ENCODE measurements at regions of chr12 and their contacts with region 1.

Region 1: GRCh38 chr12:126212824-126213223 is 1147.6 kb downstream of the AACS start:
- DNase-seq: no peak

Region 2: DNA sequence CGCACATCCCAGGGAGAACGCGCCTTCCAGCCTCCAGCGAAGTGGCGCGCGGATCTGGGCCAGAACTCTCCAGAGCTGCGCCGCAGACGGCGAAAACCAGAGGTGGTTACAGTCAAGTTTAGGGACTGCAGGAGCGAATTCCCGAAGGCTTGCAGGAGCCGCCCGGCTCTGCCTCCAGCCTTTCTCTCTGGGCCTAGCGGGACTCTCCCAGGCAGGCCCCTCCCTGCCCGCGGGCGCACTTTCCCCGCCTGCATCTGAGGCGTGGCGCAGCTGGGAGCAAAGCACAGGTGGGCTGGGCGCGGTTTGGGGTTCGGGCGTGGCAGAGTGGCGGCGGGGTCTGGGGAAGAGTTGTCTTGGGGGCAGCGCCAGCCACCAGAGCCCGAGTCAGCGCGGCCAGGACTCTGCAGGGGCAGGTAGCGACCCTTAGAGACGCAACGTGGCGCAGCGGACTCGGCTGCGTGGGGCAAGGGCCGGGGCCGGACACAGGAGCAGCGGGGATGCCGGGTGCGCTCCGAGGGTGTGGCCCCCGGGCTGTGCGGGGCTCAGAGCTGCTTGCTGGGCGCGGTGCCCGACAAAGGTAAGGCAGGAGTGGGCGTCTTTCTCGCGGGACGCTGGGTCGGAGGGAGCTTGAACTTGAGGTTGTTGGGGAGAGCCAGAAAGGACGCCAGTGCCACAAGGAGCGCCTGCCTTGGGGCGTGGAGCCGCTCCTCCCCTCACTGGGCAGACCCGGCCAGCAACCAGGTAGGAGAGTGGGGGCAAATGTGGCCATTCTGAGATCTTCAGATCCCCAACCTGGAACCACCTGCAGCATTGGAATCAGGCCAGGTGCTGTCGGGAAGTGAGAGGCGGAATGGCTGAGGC is 21.6 kb before region 1 on chr12:
- intact Hi-C with region 1: loop called in 1 of 2 experiments (anchors 1 kb)
- DNase-seq: no peak

Measured in posterior vena cava (tissue), 2 donors.